OCI-LY7 (cell line): ENCODE measurements at regions of chr2 and their contacts with region 1.

Region 1: GRCh38 chr2:200618587-200619021 is 32.8 kb downstream of the AOX1 start:
- DNase-seq: peak; percentile 45
- H3K4me3 ChIP-seq: no peak overlapping the region
- H3K27ac ChIP-seq: no peak overlapping the region
- H3K4me1 ChIP-seq: peaks cover 24% of the 10 kb centered on the region
- CTCF ChIP-seq: peak; percentile 66

Region 2: DNA sequence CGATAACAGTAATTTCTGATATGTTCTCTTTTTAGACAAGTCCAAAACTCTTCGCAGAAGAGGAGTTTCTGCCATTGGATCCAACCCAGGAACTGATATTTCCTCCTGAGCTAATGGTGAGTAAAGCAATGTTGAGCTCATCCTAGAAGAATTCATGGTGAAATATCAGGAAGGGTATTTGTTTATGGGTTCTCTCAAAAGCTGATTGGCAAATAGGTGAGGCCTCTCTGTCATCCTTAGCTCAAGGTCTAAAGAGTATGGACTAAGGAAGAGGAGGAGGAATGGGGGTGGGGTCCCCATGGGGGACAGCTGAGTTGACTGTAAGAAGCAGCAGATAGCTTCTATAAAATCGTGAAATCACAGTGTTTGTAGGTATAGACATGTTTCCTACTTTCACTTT is 14.6 kb before region 1 on chr2:
- CTCF ChIA-PET with region 1: no interaction called
- POLR2A ChIA-PET with region 1: interaction called, 18 read pairs
- intact Hi-C with region 1: no loop called
- DNase-seq: no peak
- H3K4me3 ChIP-seq: no peak overlapping the region
- H3K27ac ChIP-seq: no peak overlapping the region
- H3K4me1 ChIP-seq: no peaks in the 10 kb centered on the region
- CTCF ChIP-seq: no peak

Region 3: GRCh38 chr2:200670313-200670712 is 51.7 kb after region 1 on chr2:
- CTCF ChIA-PET with region 1: no interaction called
- POLR2A ChIA-PET with region 1: no interaction called
- intact Hi-C with region 1: no loop called
- DNase-seq: peak; percentile 14
- H3K4me3 ChIP-seq: no peak overlapping the region
- H3K27ac ChIP-seq: no peak overlapping the region
- H3K4me1 ChIP-seq: peaks cover 5% of the 10 kb centered on the region
- CTCF ChIP-seq: peak; percentile 51

Region 4: GRCh38 chr2:201298462-201299052 is 680.0 kb after region 1 on chr2:
- CTCF ChIA-PET with region 1: no interaction called
- POLR2A ChIA-PET with region 1: no interaction called
- intact Hi-C with region 1: no loop called
- DNase-seq: no peak
- H3K4me3 ChIP-seq: no peak overlapping the region
- H3K27ac ChIP-seq: no peak overlapping the region
- H3K4me1 ChIP-seq: no peaks in the 10 kb centered on the region
- CTCF ChIP-seq: no peak